Activated CD8-positive, alpha-beta memory T cell treated with anti-CD3 and anti-CD28 coated beads, Interleukin-2, amount 10 ng/mL, durations not matched to agents 7 days and 5 days (primary cell): ENCODE measurements at regions of chr11 and their contacts with region 1.

Region 1: DNA sequence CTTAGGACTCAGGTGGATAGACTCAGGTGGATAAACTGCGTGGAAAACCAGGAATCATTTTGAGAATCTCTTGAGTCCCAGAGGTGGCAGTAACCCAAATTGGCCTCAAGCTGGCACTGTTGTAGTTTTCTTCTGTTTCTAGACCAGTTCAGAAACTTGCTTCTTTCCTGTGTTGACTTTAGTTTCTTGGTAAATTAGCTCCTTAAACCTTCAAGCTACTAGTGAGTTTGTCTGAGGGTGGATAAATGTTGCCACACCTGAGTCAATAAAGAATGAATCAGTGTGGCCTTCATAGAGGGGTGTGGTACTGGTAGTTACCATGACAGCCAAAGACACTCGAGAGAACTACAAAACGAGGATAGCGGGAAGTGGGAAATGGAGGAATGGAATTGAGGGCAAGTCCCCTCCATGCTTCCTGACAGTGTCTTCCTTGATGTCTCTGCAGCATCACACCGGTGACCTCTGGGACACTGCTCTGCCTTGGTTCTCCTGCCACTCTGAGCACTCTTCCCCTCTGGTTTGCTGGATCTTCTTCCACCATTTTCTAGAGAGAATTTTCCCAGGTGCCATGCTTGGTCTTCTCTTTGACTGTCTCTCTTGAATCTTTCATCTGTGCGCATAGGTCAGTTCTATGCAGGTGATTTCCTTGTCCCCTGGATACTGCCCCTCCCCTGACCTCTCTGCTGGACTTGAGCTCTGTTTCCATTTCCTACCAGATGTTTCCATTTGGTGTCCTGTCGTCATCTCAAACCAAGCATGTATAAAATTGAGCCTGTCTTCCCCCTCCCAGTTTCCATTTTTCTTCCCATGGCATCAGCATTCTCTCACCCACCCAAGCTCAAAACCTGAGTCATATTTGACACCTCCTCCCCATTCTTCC is 7.2 kb downstream of the POLD4 start:
- DNase-seq: no peak
- ATAC-seq: peak; percentile 70
- H3K4me3 Mint-ChIP-seq: no peak overlapping the region
- H3K27ac Mint-ChIP-seq: no peak overlapping the region
- H3K4me1 Mint-ChIP-seq: peaks cover 31% of the 10 kb centered on the region
- H3K27me3 Mint-ChIP-seq: no peaks in the 10 kb centered on the region

Region 2: GRCh38 chr11:67167086-67167485 is 179.1 kb before region 1 on chr11:
- CTCF ChIA-PET with region 1: no interaction called
- DNase-seq: no peak
- ATAC-seq: no peak
- H3K4me3 Mint-ChIP-seq: no peak overlapping the region
- H3K27ac Mint-ChIP-seq: no peak overlapping the region
- H3K4me1 Mint-ChIP-seq: peaks cover 20% of the 10 kb centered on the region
- H3K27me3 Mint-ChIP-seq: no peaks in the 10 kb centered on the region

Region 3: DNA sequence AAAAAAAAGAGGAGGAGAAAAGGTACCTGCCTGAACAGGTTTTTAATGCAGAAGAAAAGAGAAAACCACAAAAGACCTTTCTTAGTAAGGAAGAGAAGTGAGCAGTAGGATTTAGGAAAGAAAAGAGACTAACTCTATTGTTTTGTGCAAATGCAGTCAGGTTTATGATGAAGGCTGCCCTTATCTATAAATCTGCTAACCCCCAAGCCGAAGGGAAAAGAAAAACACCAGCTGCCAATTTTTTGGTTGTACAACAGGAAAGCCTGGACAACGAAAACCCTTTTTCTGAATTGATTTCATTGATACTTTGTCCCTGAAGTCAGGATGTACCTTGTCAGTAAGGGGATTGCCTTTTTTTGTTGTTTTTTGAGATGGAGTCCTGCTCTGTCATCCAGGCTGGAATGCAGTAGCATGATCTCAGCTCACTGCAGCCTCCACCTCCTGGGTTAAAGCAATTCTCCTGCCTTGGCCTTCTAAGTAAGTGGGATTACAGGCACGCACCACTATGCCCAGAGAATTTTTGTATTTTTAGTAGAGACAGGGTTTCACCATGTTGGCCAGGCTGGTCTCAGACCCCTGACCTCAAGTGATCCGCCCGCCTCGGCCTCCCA is 14.0 kb before region 1 on chr11:
- CTCF ChIA-PET with region 1: interaction called, 14 read pairs
- DNase-seq: no peak
- ATAC-seq: no peak
- H3K4me3 Mint-ChIP-seq: no peak overlapping the region
- H3K27ac Mint-ChIP-seq: no peak overlapping the region
- H3K4me1 Mint-ChIP-seq: no peaks in the 10 kb centered on the region
- H3K27me3 Mint-ChIP-seq: no peaks in the 10 kb centered on the region

Region 4: GRCh38 chr11:67364783-67365722 is 18.9 kb after region 1 on chr11:
- CTCF ChIA-PET with region 1: interaction called, 1,153 read pairs
- DNase-seq: no peak
- ATAC-seq: no peak
- H3K4me3 Mint-ChIP-seq: no peak overlapping the region
- H3K27ac Mint-ChIP-seq: no peak overlapping the region
- H3K4me1 Mint-ChIP-seq: peaks cover 36% of the 10 kb centered on the region
- H3K27me3 Mint-ChIP-seq: peaks cover 51% of the 10 kb centered on the region

Region 5: DNA sequence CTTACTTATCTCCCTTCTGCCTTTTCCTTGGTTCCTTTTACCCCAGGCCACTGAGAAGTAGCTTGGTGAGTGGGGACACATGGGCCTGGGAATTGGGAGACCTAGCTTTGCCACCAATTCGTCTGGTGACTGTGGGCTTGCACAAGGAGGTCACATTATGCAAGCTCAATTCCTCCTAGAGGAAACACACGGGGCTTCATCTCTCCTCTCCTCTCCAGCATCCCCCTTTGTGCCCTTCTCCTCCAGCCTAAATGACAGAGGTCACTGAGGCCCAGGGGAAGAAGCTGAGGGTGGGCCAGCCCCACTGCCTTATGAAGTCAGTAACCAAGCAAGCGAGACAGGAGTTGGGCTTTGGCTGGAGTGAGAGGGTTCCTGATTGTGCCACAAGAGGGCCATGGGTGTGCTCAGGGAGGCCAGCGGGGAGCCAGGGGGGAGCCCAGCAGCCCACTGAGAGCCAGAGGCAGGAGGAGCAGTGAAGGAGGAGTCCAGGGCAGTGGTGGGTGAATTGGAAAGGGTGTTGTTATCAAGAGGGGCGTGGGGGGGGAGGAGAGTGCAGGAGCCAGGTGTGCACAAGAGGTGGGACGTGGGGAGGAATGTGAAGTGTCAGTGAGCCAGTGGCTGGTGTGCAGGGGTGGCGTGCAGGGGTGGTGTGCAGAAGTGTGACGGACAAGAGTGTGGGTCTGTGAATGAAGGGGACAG is 25.2 kb after region 1 on chr11:
- CTCF ChIA-PET with region 1: interaction called, 1,153 read pairs
- DNase-seq: no peak
- ATAC-seq: no peak
- H3K4me3 Mint-ChIP-seq: peak overlapping the region; percentile 44
- H3K27ac Mint-ChIP-seq: no peak overlapping the region
- H3K4me1 Mint-ChIP-seq: peaks cover 50% of the 10 kb centered on the region
- H3K27me3 Mint-ChIP-seq: peaks cover 58% of the 10 kb centered on the region

Region 6: DNA sequence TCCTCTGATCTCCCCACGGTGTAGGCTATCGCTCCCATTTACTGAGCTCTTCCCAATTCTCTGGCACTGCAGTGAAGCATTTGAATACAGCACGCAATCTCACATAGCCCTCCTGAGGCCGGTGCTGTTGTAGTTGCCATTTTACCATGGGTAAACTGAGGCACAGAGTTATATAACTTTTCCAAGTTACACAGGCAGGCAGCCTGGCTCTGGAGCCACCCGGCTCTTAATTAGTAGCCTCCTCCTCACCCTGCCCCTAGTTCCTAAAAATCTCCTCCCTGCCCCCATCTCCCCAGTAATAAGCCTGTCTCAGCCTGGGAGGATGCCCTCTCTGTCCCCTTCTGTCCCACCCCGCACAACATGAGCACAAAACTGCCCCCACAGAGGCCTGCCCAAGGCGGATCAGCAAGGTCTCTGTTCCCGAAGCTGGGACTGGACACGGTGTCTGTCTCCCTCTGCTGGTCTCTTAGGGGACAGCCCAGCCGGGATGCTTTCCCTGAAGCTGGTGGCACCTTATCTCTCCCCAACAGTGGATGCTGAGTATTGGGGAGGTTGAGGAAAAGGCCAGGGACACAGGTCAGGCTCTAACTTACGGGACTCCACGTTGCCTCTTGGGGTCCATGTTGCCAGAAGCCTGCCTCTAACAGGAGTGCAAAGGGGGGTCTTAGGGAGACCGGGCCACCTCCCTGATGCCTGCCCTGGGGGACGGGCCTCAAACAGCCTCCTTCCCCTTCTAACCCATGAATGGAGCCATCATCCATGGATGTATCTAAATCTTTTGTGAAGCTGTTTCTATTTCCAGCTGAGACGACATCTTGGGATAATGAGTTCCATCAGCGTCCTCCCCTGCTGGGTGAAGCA is 36.3 kb after region 1 on chr11:
- CTCF ChIA-PET with region 1: interaction called, 1,153 read pairs
- DNase-seq: peak; percentile 90
- ATAC-seq: peak; percentile 94
- H3K4me3 Mint-ChIP-seq: no peak overlapping the region
- H3K27ac Mint-ChIP-seq: no peak overlapping the region
- H3K4me1 Mint-ChIP-seq: peaks cover 5% of the 10 kb centered on the region
- H3K27me3 Mint-ChIP-seq: peaks cover 38% of the 10 kb centered on the region

Region 7: DNA sequence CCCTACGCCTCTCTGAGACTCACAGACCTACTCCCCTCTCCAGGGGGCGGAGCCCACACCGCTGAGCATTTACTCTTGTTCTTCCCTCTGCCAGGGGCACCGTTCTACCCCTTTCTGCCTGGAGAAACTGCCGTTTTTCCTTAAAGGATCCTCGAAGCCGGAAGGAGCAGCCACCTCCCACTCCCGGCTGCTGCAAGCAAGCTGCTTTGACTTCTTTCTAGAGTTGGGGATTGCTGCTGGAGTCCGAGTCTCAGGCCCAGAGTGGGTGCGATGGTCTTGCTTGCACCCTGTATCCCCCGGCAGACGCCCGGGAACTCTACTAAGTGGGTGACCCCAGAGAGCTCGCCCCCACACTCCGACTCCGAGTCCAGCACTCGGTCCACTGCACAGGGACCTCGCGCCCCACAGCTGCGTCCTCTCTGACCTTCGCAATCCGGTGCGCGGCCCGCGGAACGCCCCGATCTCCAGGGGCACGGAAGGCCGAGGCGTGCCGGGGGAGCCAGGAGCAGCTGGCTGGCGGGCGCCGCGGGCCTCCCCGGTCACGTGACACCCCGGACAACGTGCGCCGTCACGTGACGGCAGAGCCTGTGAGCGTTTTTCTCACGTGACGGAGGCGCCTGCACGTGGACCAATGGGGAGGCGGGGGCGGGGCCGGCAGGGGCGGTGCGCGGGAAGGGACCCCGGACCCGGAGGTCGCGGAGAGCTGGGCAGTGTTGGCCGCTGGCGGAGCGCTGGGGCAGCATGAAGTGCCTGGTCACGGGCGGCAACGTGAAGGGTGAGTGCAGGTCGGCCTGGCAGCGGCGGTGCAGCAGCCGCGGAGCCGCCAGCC is 45.4 kb after region 1 on chr11 and contains the start of gene RAD9A:
- CTCF ChIA-PET with region 1: interaction called, 1,153 read pairs
- DNase-seq: peak; percentile 97
- ATAC-seq: peak; percentile 88
- H3K4me3 Mint-ChIP-seq: peak within 1 kb of the TSS; percentile 95
- H3K27ac Mint-ChIP-seq: peak within 1 kb of the TSS; percentile 80
- H3K4me1 Mint-ChIP-seq: peaks cover 40% of the 10 kb centered on the region
- H3K27me3 Mint-ChIP-seq: no peaks in the 10 kb centered on the region
- total RNA-seq, gene RAD9A: 49.6 to 80.5 TPM